ENCODE measurements at regions of chr11 and their contacts with region 1.

Region 1: GRCh38 chr11:44538375-44539054 is 26.9 kb upstream of the CD82 start:
- DNase-seq: no peak
- ATAC-seq: peak; percentile 97
- H3K4me3 ChIP-seq: no peak overlapping the region
- H3K27ac ChIP-seq: no peak overlapping the region
- H3K4me1 ChIP-seq: no peaks in the 10 kb centered on the region; the same call in 1 of the 2 replicates
- H3K27me3 ChIP-seq: no peaks in the 10 kb centered on the region
- CTCF ChIP-seq: peak; percentile 94

Region 2: GRCh38 chr11:44133335-44133946 is 405.1 kb before region 1 on chr11:
- CTCF ChIA-PET with region 1: no interaction called
- POLR2A ChIA-PET with region 1: no interaction called
- in situ Hi-C with region 1: no loop called
- intact Hi-C with region 1: loop called (anchors 2 kb)
- DNase-seq: no peak
- ATAC-seq: peak; percentile 83
- H3K4me3 ChIP-seq: no peak overlapping the region
- H3K27ac ChIP-seq: no peak overlapping the region
- H3K4me1 ChIP-seq: 0 out of 2 replicates have a peak, but pooled peaks cover under 1% of the 10 kb centered on the region
- H3K27me3 ChIP-seq: no peaks in the 10 kb centered on the region
- CTCF ChIP-seq: peak; percentile 77

Region 3: DNA sequence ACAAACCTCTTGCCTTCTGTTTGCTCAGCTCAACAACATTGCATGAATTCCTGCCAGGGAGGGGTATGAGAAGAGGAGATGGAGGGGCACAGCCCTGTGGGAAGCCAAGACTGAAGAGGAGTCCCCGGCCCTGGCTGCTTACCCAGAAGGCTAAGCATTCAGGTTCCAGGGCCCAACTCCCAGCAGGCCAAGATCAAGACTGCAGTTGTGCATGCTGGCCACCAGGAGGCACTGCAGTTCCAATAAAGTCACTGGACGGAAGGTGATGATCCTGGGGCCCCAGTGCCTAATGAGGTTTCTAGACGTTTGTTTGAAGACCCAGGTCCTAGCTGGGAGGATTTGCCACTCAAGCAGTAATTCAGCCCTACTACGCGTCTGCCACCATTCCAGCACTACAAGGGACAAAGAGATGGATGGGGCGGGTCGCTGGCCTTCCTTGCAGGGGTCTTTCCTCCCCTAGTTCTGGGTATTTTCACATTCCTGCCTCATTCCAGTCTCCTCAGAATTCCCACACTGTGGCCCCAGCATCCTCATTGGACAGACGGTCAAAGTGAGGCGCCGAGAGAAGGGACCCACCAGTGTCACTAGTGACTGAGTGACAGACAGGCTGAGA is 252.1 kb before region 1 on chr11:
- CTCF ChIA-PET with region 1: interaction called, 4 read pairs
- POLR2A ChIA-PET with region 1: no interaction called
- in situ Hi-C with region 1: no loop called
- intact Hi-C with region 1: loop called (anchors 2 kb)
- DNase-seq: peak; percentile 47
- ATAC-seq: peak; percentile 87
- H3K4me3 ChIP-seq: no peak overlapping the region
- H3K27ac ChIP-seq: no peak overlapping the region
- H3K4me1 ChIP-seq: peaks cover 4% of the 10 kb centered on the region
- H3K27me3 ChIP-seq: no peaks in the 10 kb centered on the region
- CTCF ChIP-seq: peak; percentile 94

Region 4: DNA sequence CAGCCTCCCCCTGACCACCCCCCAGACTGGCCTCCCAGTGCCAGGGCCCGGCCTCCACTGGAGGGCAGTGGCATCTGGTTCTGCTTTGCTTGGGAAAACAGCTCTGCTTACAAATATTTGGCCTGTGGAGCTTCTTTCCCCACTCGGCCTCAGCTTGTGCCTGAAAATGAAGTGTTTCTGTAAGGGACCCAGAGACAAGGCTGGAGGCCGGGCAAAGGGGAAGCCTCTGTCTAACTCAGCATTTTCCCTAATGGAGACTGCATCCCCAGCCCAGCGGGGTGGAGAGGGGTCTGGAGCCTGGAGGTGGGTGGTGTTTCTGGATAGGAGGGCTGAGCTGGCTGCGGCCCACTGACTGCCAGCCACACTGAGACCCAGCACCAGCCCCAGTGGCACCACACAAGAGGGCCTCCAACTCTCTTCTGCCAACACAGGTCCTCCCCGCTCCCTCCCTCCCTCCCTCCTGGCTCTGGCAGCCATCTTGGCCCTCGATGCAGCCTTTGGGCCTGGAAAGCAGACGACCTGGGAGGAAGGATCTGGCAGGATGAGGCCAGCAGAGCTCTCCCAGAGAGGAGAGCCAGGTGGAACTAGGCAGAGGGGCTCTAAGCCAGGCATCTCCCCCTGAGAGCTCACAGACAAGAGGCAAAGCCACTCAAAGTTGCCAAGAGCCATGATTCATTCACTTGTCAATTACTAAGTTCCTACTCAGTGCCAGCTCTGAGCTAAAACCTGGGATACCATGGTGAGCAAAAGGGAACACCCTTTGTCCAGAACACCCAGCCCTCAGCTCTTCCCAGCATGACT is 50.1 kb before region 1 on chr11:
- CTCF ChIA-PET with region 1: no interaction called
- POLR2A ChIA-PET with region 1: no interaction called
- in situ Hi-C with region 1: no loop called
- intact Hi-C with region 1: no loop called
- DNase-seq: no peak
- ATAC-seq: no peak
- H3K4me3 ChIP-seq: no peak overlapping the region
- H3K27ac ChIP-seq: no peak overlapping the region
- H3K4me1 ChIP-seq: no peaks in the 10 kb centered on the region
- H3K27me3 ChIP-seq: no peaks in the 10 kb centered on the region
- CTCF ChIP-seq: no peak

Region 5: DNA sequence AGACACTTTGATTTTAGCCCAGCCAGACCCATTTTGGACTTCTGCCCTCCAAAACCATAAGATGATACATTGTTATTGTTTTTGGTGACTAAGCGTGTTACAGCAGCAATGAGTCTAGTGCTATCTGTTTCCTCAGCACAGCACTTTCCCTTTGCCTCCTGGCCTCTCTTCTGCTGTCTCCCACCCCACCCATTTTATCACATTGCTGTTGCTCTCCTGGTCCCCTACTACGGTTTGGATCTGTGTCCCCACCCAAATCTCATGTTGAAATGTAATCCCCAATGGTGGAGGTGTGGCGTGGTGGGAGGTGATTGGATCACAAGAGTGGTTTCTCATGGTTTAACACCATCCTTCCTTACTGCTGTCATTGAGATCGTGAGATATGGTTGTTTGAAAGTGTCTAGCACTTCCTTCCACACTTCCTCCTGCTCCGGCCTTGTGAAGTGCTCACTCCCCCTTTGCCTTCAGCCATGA is 32.9 kb before region 1 on chr11:
- CTCF ChIA-PET with region 1: no interaction called
- POLR2A ChIA-PET with region 1: no interaction called
- in situ Hi-C with region 1: no loop called
- intact Hi-C with region 1: no loop called
- DNase-seq: no peak
- ATAC-seq: no peak
- H3K4me3 ChIP-seq: no peak overlapping the region
- H3K27ac ChIP-seq: no peak overlapping the region
- H3K4me1 ChIP-seq: peaks cover 13% of the 10 kb centered on the region
- H3K27me3 ChIP-seq: peaks cover under 1% of the 10 kb centered on the region; the same call in 1 of the 2 replicates
- CTCF ChIP-seq: no peak

Region 6: DNA sequence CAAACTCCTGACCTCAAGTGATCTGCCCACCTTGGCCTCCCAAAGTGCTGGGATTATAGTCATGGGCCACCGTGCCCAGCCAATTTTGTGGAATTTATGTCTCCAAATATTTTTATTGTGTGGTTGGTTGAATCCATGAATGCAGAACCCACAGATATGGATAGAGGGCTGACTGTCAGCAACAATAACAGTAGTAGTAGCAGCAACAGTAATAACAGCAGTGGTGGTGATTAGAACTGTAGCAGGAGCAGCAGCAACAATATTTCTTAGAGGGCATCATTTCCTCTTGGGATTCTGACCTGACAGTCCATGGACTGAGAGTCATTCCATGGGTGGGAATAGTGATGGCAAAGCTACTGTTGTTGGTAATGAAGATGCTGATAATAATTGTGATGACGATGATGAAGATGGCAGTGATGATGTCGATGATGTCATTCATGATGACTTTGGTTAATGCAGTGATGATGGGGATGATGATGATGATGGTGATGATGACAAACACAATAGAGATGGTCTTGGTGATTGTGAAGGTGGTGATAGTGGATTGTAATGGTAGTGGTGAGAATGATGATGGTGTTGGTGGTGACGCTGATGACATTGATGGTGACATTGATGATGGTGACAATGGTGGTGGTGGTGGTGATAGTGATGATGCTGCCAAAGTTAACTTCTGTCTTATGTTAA is 13.1 kb after region 1 on chr11:
- CTCF ChIA-PET with region 1: no interaction called
- POLR2A ChIA-PET with region 1: interaction called, 14 read pairs
- in situ Hi-C with region 1: no loop called
- intact Hi-C with region 1: no loop called
- DNase-seq: no peak
- ATAC-seq: no peak
- H3K4me3 ChIP-seq: no peak overlapping the region
- H3K27ac ChIP-seq: no peak overlapping the region
- H3K4me1 ChIP-seq: no peaks in the 10 kb centered on the region
- H3K27me3 ChIP-seq: no peaks in the 10 kb centered on the region
- CTCF ChIP-seq: no peak